ENCODE measurements at regions of chr11 and their contacts with region 1.

Region 1: DNA sequence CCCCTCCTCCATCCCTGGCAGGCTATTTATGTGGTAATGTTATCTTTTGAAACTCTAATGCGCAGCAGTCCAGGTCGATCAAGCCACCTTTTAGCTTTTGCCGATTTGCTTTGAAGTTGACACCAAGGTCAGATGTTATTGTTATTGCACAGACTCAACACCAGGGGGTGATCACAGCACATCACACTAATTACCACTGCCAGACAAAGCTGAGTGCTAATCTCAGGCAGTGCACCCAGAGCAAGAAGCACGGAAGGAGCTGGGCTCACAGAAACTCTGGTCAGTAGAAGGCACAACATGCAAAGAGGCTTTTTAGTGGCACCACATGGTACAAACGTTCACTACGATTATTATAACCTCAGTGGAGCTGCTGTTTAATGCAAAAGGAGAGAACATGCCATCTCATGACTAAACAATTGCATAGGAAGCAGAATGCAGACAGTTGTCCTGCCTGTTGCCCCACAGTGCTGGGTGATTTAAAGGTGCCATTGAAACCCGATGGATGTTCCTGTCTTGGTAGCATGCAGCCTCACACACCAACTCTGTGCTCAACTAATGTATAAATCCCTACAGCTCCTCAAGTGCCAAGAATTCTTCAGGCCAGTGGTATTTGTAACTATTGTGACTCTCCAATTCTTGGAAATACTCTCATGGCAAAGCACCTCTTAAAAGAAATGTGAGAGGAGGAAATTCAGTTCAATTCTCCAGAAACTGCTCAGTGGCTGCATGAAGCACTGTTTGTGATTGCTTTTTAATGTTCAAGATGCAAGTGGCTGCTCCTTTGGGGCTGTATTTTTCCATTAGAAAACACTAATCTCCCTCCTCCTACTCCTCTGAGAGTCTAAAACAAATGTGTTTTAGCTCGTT is 353.9 kb upstream of the DDI1 start:
- DNase-seq: no peak
- H3K4me3 ChIP-seq: no peak overlapping the region
- H3K27me3 ChIP-seq: no peaks in the 10 kb centered on the region
- CTCF ChIP-seq: peak; percentile 78

Region 2: DNA sequence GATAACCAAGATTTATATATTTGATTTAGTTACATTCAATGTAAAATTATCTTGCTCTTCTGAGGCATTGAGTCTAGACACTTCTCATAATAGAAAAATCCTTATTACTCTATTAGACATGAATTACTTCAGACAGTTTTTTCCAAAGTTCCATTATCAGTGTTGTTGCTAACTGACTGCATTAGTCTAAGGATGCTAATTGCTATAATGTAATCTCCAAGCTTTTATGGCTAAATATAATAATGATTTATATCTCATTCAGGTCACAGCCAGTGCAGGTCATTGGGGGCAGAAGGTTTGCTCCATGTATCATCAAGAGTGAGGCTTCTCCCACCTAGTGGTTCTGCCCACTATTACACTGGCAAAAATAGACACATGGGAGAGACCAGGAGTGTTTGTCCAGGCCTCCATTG is 23.3 kb before region 1 on chr11:
- CTCF ChIA-PET with region 1: no interaction called
- POLR2A ChIA-PET with region 1: no interaction called
- DNase-seq: no peak
- H3K4me3 ChIP-seq: no peak overlapping the region
- H3K27me3 ChIP-seq: no peaks in the 10 kb centered on the region
- CTCF ChIP-seq: peak; percentile 37; the same call in 1 of the 2 replicates

Region 3: GRCh38 chr11:103696123-103696522 is 13.6 kb after region 1 on chr11:
- CTCF ChIA-PET with region 1: interaction called, 15 read pairs
- POLR2A ChIA-PET with region 1: interaction called, 4 read pairs
- DNase-seq: no peak
- H3K4me3 ChIP-seq: no peak overlapping the region
- H3K27me3 ChIP-seq: no peaks in the 10 kb centered on the region
- CTCF ChIP-seq: no peak

Region 4: GRCh38 chr11:104094576-104094975 is 412.0 kb after region 1 on chr11:
- CTCF ChIA-PET with region 1: no interaction called
- POLR2A ChIA-PET with region 1: no interaction called
- DNase-seq: no peak
- H3K4me3 ChIP-seq: no peak overlapping the region
- H3K27me3 ChIP-seq: no peaks in the 10 kb centered on the region
- CTCF ChIP-seq: no peak

Region 5: GRCh38 chr11:104106136-104106754 is 423.7 kb after region 1 on chr11:
- CTCF ChIA-PET with region 1: interaction called, 11 read pairs
- POLR2A ChIA-PET with region 1: no interaction called
- DNase-seq: peak; percentile 81
- H3K4me3 ChIP-seq: no peak overlapping the region
- H3K27me3 ChIP-seq: no peaks in the 10 kb centered on the region
- CTCF ChIP-seq: no peak

Region 6: GRCh38 chr11:104148074-104148473 is 465.5 kb after region 1 on chr11:
- CTCF ChIA-PET with region 1: interaction called, 20 read pairs
- POLR2A ChIA-PET with region 1: no interaction called
- DNase-seq: peak; percentile 31
- H3K4me3 ChIP-seq: no peak overlapping the region
- H3K27me3 ChIP-seq: no peaks in the 10 kb centered on the region
- CTCF ChIP-seq: no peak

Region 7: GRCh38 chr11:104155375-104155774 is 472.8 kb after region 1 on chr11:
- CTCF ChIA-PET with region 1: interaction called, 13 read pairs
- POLR2A ChIA-PET with region 1: no interaction called
- DNase-seq: no peak
- H3K4me3 ChIP-seq: no peak overlapping the region
- H3K27me3 ChIP-seq: no peaks in the 10 kb centered on the region
- CTCF ChIP-seq: no peak